ENCODE measurements at regions of chr16 and their contacts with region 1.

Region 1: DNA sequence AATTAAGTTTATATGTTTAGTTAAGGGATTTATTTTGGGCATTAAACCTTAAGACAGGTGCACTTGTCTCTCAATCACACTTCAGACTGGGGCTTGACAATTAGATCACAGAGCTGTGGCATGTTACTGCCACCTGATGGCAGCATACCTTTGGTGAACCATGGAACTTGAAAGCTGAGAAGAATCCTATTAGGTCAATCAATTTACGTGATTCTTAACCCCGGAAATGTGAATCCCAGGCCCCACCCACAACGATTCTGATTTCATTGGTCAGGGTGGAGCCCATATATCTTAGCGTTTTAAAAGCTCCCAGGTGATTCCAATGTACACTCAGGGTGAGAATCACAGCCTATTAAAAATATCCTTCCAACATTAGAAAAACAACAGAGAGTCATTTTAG is 91.0 kb downstream of the GSG1L start:
- DNase-seq: peak in 12 of 14 experiments; percentile 3 to 67 (median 20)
- ATAC-seq: peak; percentile 57
- H3K4me3 ChIP-seq: no peak overlapping the region
- H3K4me3 Mint-ChIP-seq: no peak overlapping the region
- H3K27ac ChIP-seq: no peak overlapping the region
- H3K27ac Mint-ChIP-seq: no peak overlapping the region
- H3K4me1 ChIP-seq: peaks cover 5% of the 10 kb centered on the region
- H3K4me1 Mint-ChIP-seq: no peaks in the 10 kb centered on the region
- H3K27me3 ChIP-seq: peaks cover 4 to 10% of the 10 kb centered on the region in 2 experiments
- H3K27me3 Mint-ChIP-seq: peaks cover 29% of the 10 kb centered on the region
- CTCF ChIP-seq: peak; percentile 60

Region 2: DNA sequence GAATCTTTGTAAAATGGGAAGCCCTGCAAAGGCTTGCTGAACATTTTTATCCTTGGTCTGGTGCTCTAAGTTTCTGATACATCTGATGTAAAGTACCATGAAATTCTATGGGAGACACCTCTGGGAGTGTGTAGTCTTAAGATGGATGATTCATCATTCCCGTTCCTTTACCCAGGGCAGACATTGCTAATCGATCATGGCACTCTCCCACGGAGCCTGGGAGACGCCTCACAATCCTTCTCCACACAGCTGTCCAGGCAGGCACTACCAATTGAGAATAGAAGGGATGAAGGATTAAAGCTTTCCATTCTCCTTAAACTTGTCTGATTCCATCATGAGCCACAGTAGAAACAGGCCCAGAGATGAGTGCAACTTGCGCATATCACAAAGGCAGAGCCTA is 53.7 kb before region 1 on chr16:
- CTCF ChIA-PET with region 1: no interaction called
- POLR2A ChIA-PET with region 1: no interaction called
- intact Hi-C with region 1: loop called in 1 of 2 experiments (anchors 10 kb)
- DNase-seq: no peak
- ATAC-seq: no peak
- H3K4me3 ChIP-seq: no peak overlapping the region
- H3K4me3 Mint-ChIP-seq: no peak overlapping the region
- H3K27ac ChIP-seq: no peak overlapping the region
- H3K27ac Mint-ChIP-seq: no peak overlapping the region
- H3K4me1 ChIP-seq: no peaks in the 10 kb centered on the region
- H3K4me1 Mint-ChIP-seq: no peaks in the 10 kb centered on the region
- H3K27me3 ChIP-seq: peaks cover 9 to 10% of the 10 kb centered on the region in 2 experiments
- H3K27me3 Mint-ChIP-seq: peaks cover 57% of the 10 kb centered on the region
- CTCF ChIP-seq: no peak

Region 3: GRCh38 chr16:28067604-28068379 is 95.3 kb after region 1 on chr16:
- CTCF ChIA-PET with region 1: interaction called, 7 read pairs
- POLR2A ChIA-PET with region 1: interaction called, 4 read pairs
- intact Hi-C with region 1: loop called (anchors 1 to 5 kb)
- DNase-seq: no peak
- ATAC-seq: no peak
- H3K4me3 ChIP-seq: no peak overlapping the region
- H3K4me3 Mint-ChIP-seq: no peak overlapping the region
- H3K27ac ChIP-seq: no peak overlapping the region
- H3K27ac Mint-ChIP-seq: no peak overlapping the region
- H3K4me1 ChIP-seq: no peaks in the 10 kb centered on the region
- H3K4me1 Mint-ChIP-seq: no peaks in the 10 kb centered on the region
- H3K27me3 ChIP-seq: peaks cover 7 to 9% of the 10 kb centered on the region in 2 experiments
- H3K27me3 Mint-ChIP-seq: peaks cover 24% of the 10 kb centered on the region
- CTCF ChIP-seq: no peak

Region 4: GRCh38 chr16:28317040-28317880 is 344.8 kb after region 1 on chr16:
- CTCF ChIA-PET with region 1: no interaction called
- POLR2A ChIA-PET with region 1: no interaction called
- intact Hi-C with region 1: loop called in 1 of 2 experiments (anchors 10 kb)
- DNase-seq: peak; percentile 61 to 86 (median 70)
- ATAC-seq: peak; percentile 75
- H3K4me3 ChIP-seq: no peak overlapping the region
- H3K4me3 Mint-ChIP-seq: peak overlapping the region; percentile 38
- H3K27ac ChIP-seq: no peak overlapping the region
- H3K27ac Mint-ChIP-seq: peak overlapping the region; percentile 78
- H3K4me1 ChIP-seq: peaks cover 50% of the 10 kb centered on the region
- H3K4me1 Mint-ChIP-seq: peaks cover 28% of the 10 kb centered on the region
- H3K27me3 ChIP-seq: no peaks in the 10 kb centered on the region
- H3K27me3 Mint-ChIP-seq: no peaks in the 10 kb centered on the region
- CTCF ChIP-seq: peak; percentile 95